GM10248 (cell line): ENCODE measurements at regions of chr2 and their contacts with region 1.

Region 1: GRCh38 chr2:151851761-151852160 is 23.5 kb upstream of the ARL5A start:
- DNase-seq: no peak
- CTCF ChIP-seq: no peak

Region 2: DNA sequence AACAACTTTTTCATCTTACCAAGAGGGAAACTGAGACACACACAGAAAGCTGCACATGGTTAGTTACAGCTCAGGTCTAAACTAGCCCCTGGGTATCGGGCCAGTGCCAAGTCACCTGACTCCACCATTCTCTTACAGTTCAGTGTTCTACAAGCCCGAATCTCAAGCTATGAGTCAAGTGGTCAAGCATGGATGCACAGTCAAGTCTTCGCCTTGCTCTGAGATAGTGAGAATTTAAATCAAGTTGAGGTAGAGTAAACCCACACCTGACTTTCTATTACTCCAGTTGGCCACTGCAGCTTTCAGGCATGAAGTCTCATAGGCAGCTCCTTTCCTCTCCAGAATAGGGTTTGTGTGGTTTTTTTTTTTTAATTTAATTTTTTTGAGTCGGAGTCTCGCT is 10.9 kb after region 1 on chr2:
- CTCF ChIA-PET with region 1: interaction called, 13 read pairs
- POLR2A ChIA-PET with region 1: no interaction called
- DNase-seq: peak; percentile 76
- CTCF ChIP-seq: no peak